Calu3 (cell line): ENCODE measurements at regions of chr1 and their contacts with region 1.

Region 1: GRCh38 chr1:27284425-27285273 is 37.3 kb upstream of the TMEM222 start:
- DNase-seq: peak; percentile 80
- H3K4me3 Mint-ChIP-seq: no peak overlapping the region
- H3K27ac Mint-ChIP-seq: no peak overlapping the region
- H3K4me1 Mint-ChIP-seq: no peaks in the 10 kb centered on the region
- H3K27me3 Mint-ChIP-seq: no peaks in the 10 kb centered on the region
- CTCF ChIP-seq: peak; percentile 45

Region 2: GRCh38 chr1:27102707-27103491 is 181.8 kb before region 1 on chr1:
- CTCF ChIA-PET with region 1: interaction called, 4 read pairs
- intact Hi-C with region 1: loop called (anchors 1 kb)
- DNase-seq: peak; percentile 83
- H3K4me3 Mint-ChIP-seq: no peak overlapping the region
- H3K27ac Mint-ChIP-seq: no peak overlapping the region
- H3K4me1 Mint-ChIP-seq: peaks cover 15% of the 10 kb centered on the region
- H3K27me3 Mint-ChIP-seq: no peaks in the 10 kb centered on the region
- CTCF ChIP-seq: peak; percentile 85

Region 3: DNA sequence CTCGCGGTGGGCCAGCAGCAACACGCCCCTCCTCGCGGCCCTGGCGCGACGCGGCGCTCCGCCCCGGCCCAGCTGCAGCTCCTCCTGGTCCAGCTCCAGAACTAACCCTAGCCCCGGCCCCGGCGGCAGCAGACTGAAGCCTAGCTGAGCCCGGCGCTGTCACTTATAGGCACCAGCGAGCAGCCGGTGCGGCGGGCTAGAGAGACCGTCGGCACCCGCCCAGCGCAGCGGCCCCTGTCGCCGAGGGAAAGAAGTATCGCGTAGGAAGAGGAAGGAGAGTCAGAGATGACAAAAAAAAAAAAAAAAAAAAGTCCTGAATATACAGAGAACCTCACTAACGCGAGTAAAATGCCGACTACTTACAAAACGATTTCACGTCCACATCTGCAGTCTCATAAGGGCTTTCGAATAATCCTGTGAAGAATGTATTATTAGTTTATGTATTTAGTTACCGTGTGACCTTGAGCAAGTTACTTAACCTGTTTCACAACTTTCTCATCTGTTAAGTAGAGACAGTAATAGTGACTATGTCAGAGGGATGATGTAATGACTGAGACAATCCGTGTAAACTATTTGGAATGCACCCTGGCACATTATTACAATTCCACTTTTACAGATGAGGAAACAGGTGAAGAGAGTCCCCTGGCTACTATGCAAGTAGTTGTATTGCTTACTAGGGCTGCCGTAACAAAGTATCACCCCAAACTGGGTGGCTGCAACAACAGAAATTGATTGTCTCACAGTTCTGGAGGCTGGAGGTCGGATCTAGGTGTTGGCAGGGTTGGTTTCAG is 129.5 kb before region 1 on chr1 and contains the start of gene SLC9A1:
- CTCF ChIA-PET with region 1: no interaction called
- intact Hi-C with region 1: no loop called
- DNase-seq: peak; percentile 85
- H3K4me3 Mint-ChIP-seq: peak within 1 kb of the TSS; percentile 90
- H3K27ac Mint-ChIP-seq: peak within 1 kb of the TSS; percentile 96
- H3K4me1 Mint-ChIP-seq: peaks cover 42% of the 10 kb centered on the region
- H3K27me3 Mint-ChIP-seq: no peaks in the 10 kb centered on the region
- CTCF ChIP-seq: no peak
- total RNA-seq, gene SLC9A1: 16.4 and 17.4 TPM in 2 replicates

Region 4: GRCh38 chr1:27519331-27520258 is 234.9 kb after region 1 on chr1:
- CTCF ChIA-PET with region 1: no interaction called
- intact Hi-C with region 1: no loop called
- DNase-seq: no peak
- H3K4me3 Mint-ChIP-seq: no peak overlapping the region
- H3K27ac Mint-ChIP-seq: no peak overlapping the region
- H3K4me1 Mint-ChIP-seq: peaks cover 28% of the 10 kb centered on the region
- H3K27me3 Mint-ChIP-seq: no peaks in the 10 kb centered on the region
- CTCF ChIP-seq: no peak